Heart left ventricle (tissue), 16 donors: ENCODE measurements at regions of chr2 and their contacts with region 1.

Region 1: DNA sequence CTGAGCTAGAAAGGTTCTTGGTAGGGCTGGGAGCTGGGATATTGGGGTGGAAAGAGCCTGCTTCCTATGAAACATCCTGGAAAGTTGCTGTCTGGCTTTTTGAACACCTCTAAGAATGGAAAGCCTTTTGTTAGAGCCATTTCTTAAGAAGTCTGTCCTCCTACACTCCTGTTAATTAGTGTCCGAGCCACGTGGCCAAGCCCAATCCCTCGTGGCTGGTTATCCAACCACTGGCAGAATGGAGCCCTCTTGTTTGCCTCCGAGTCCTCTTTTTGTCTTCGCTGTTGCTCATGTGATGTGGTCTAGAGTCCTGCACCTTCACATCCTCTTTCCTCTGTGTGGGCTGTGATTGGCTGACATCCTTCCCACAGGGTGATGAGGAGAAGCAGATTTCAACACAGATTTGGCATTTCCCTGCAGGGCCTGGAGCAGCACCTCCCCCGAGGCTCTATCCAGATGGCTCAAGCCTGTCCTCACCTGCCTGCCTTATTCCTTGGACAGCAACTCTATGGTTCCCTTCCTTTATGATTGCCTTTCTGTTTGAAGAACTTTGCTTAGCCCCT is 8.2 kb upstream of the TOGARAM2 start:
- DNase-seq: no peak
- ATAC-seq: no peak
- H3K4me3 ChIP-seq: no peak overlapping the region
- H3K27ac ChIP-seq: no peak overlapping the region
- H3K4me1 ChIP-seq: peaks cover 0 to 15% (median 0%) of the 10 kb centered on the region in 12 donors
- H3K27me3 ChIP-seq: no peaks in the 10 kb centered on the region
- CTCF ChIP-seq: no peak
- POLR2A ChIP-seq: no peak

Region 2: GRCh38 chr2:29129586-29130281 is 156.9 kb after region 1 on chr2:
- intact Hi-C with region 1: loop called in 1 of 10 experiments (anchors 5 kb)
- DNase-seq: no peak
- ATAC-seq: peak in 2 of 4 donors; percentile 16 to 22
- H3K4me3 ChIP-seq: no peak overlapping the region
- H3K27ac ChIP-seq: peak overlapping the region in 9 of 12 donors; percentile 0 to 53 (median 33)
- H3K4me1 ChIP-seq: peaks cover 0 to 24% (median 15%) of the 10 kb centered on the region in 12 donors
- H3K27me3 ChIP-seq: no peaks in the 10 kb centered on the region
- CTCF ChIP-seq: no peak
- POLR2A ChIP-seq: no peak

Region 3: DNA sequence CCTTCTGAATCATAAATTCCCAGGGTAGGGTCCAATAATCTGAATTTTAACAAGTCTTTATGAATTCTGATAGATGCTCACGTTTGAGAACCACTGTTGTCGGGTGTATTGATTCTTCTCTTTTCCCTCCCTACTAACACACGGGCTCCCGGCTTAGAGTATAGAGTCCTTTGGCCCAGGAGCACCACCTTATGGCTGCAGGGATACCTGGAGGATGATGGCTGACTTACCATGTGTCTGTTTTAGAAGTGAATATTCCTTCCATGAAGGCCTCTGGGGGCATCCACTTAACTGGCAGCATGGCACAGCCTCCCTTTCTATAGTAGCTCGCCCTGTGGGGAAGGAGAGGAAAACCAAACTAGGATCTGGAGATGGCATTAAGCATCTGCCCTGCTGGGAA is 234.1 kb after region 1 on chr2:
- intact Hi-C with region 1: no loop called
- DNase-seq: no peak
- ATAC-seq: no peak
- H3K4me3 ChIP-seq: no peak overlapping the region
- H3K27ac ChIP-seq: no peak overlapping the region
- H3K4me1 ChIP-seq: no peaks in the 10 kb centered on the region
- H3K27me3 ChIP-seq: no peaks in the 10 kb centered on the region
- CTCF ChIP-seq: no peak
- POLR2A ChIP-seq: no peak